Activated T-helper 1 cell treated with anti-CD3 and anti-CD28 coated beads, Interleukin-12 subunit alpha, Interleukin-12 subunit beta, Interleukin-2, Interleukin-4 antibody, amounts not matched to agents 30 ng/mL and 10 ng/mL and 1 ng/mL, durations not matched to agents 14 hours and 24 hours and 36 hours (primary cell): ENCODE measurements at regions of chr5 and their contacts with region 1.

Region 1: GRCh38 chr5:57298295-57298984 is 124.6 kb downstream of the GPBP1 start:
- DNase-seq: peak; percentile 73
- H3K4me3 Mint-ChIP-seq: peak overlapping the region; percentile 68
- H3K27ac Mint-ChIP-seq: peak overlapping the region; percentile 64
- H3K4me1 Mint-ChIP-seq: peaks cover 30% of the 10 kb centered on the region
- H3K27me3 Mint-ChIP-seq: peaks cover 2% of the 10 kb centered on the region

Region 2: DNA sequence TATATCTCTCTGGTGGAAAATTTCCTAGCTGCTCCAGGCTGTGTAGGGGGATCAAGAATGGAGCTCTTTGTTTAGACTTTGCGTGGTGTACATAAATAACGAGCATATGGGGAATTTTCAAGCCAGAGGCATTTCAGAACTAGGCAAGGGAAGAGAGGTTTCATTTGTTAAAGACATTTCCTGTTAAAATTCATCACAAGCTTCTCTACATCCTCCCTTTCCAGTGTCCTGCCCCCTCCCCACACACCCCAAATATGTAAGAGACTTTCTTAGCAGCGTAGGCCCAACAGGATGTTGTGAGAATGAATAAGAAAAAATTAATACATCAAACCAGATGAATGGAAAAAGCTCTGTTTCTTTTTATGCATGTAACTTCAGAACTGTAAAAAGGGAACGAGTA is 25.7 kb after region 1 on chr5:
- intact Hi-C with region 1: loop called (anchors 1 kb)
- DNase-seq: no peak
- H3K4me3 Mint-ChIP-seq: no peak overlapping the region
- H3K27ac Mint-ChIP-seq: peak overlapping the region; percentile 32
- H3K4me1 Mint-ChIP-seq: peaks cover 21% of the 10 kb centered on the region
- H3K27me3 Mint-ChIP-seq: no peaks in the 10 kb centered on the region

Region 3: DNA sequence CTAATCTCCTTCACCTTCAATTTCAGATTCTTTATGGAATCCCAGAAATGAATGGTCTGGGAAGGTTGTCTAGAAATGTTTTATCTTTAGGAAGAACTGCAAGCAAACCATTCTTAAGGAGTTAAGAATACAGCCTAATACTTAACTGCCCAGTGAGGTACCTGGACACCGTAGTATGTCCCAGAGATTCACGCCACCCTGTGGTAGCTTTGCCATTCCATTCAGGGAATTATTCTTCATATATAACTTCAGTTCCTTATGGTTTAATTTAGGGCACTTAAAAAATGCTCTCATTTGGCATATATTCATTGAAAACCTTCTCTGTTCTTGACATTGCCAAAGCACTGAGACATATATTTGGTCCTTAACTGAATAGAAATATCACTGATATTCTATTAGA is 134.4 kb after region 1 on chr5:
- intact Hi-C with region 1: loop called (anchors 2 kb)
- DNase-seq: no peak
- H3K4me3 Mint-ChIP-seq: no peak overlapping the region
- H3K27ac Mint-ChIP-seq: no peak overlapping the region
- H3K4me1 Mint-ChIP-seq: no peaks in the 10 kb centered on the region
- H3K27me3 Mint-ChIP-seq: no peaks in the 10 kb centered on the region

Region 4: DNA sequence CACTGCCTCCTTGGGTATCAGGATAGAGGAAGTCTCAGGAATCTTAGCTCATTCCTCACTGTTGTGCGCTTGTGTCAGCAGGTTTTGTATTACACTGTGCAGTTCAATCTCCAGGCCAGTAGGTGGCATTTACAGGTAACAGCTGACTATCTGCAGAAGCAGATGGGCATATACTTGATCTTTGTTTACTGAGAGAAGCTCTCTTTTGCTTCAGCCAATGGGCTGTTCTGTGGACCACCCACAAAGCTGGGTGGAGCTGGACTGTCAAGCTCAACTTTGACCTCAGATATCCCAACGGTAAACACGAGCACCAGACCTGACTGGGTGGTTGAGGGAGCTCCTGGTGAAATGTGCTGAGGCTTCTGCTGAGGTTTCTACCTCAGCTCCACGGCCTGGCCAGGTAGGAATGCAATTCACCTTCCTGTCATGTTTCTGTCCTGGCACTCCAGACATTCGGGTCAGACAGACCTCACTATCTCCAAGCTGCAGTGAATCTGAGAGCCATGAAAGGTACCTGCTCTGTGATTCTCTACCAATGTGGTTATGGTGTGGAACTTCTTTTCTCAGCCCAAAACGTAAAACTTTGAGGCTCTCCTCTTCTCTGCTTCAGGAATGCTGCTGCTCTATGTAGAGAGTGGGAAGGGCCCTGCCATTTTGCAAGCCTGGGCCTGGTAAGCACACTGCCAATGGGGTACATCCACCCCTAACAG is 352.1 kb after region 1 on chr5:
- intact Hi-C with region 1: loop called (anchors 1 kb)
- DNase-seq: peak; percentile 2
- H3K4me3 Mint-ChIP-seq: no peak overlapping the region
- H3K27ac Mint-ChIP-seq: no peak overlapping the region
- H3K4me1 Mint-ChIP-seq: no peaks in the 10 kb centered on the region
- H3K27me3 Mint-ChIP-seq: peaks cover 6% of the 10 kb centered on the region

Region 5: GRCh38 chr5:58460732-58461286 is 1162.4 kb after region 1 on chr5:
- intact Hi-C with region 1: loop called (anchors 1 kb)
- DNase-seq: peak; percentile 85
- H3K4me3 Mint-ChIP-seq: peak overlapping the region; percentile 2
- H3K27ac Mint-ChIP-seq: peak overlapping the region; percentile 59
- H3K4me1 Mint-ChIP-seq: peaks cover 15% of the 10 kb centered on the region
- H3K27me3 Mint-ChIP-seq: peaks cover 16% of the 10 kb centered on the region